ENCODE measurements at regions of chr1 and their contacts with region 1.

Region 1: GRCh38 chr1:12001249-12001917 is 17.9 kb upstream of the MIIP start:
- DNase-seq: peak; percentile 68
- H3K4me3 ChIP-seq: no peak overlapping the region
- H3K27ac ChIP-seq: no peak overlapping the region
- H3K4me1 ChIP-seq: no peaks in the 10 kb centered on the region
- CTCF ChIP-seq: peak; percentile 87

Region 2: GRCh38 chr1:11576109-11576875 is 425.1 kb before region 1 on chr1:
- CTCF ChIA-PET with region 1: no interaction called
- POLR2A ChIA-PET with region 1: no interaction called
- intact Hi-C with region 1: no loop called
- DNase-seq: no peak
- H3K4me3 ChIP-seq: no peak overlapping the region
- H3K27ac ChIP-seq: no peak overlapping the region
- H3K4me1 ChIP-seq: no peaks in the 10 kb centered on the region
- CTCF ChIP-seq: no peak

Region 3: GRCh38 chr1:11907275-11908094 is 93.9 kb before region 1 on chr1:
- CTCF ChIA-PET with region 1: no interaction called
- POLR2A ChIA-PET with region 1: no interaction called
- intact Hi-C with region 1: no loop called
- DNase-seq: peak; percentile 96
- H3K4me3 ChIP-seq: no peak overlapping the region
- H3K27ac ChIP-seq: peak overlapping the region; percentile 98
- H3K4me1 ChIP-seq: peaks cover 10% of the 10 kb centered on the region
- CTCF ChIP-seq: peak; percentile 97

Region 4: DNA sequence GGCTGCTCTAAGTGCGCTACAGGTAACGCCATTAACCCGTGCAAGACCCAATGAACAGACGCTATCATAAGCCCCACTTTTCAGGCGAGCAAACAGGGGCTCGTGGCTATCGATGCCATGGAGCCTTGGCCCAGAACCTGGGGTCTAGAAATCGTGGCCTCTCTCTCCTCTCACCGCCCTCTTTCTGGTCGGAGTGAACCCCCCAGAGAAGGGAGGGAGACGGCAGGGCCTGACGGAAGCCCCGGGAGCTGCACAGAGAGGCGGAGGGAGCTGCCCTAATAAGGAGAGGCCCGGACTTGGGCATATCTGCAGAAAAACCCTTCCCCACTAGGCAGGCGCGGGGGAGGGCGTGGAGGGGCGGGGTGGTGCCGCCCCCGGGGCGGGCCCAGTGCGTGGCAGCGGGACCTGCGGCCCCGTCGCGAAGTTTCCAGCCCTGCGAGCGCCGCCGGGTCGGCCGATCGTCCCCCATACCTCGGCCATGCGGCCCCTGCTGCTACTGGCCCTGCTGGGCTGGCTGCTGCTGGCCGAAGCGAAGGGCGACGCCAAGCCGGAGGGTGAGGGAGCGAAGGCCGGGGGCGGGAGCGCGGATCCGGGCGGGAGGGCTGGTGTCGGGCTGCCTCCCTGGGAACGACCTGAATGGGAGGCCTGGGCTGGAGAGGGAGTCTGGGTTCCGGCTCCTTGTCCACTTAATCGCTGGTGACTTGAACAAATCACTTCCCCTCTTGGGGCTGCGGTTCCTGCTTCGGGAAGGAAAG is 66.9 kb before region 1 on chr1 and contains the start of gene PLOD1:
- CTCF ChIA-PET with region 1: no interaction called
- POLR2A ChIA-PET with region 1: no interaction called
- intact Hi-C with region 1: no loop called
- DNase-seq: peak; percentile 76
- H3K4me3 ChIP-seq: peak within 1 kb of the TSS; percentile 73
- H3K27ac ChIP-seq: no peak within 1 kb of the TSS
- H3K4me1 ChIP-seq: peaks cover 31% of the 10 kb centered on the region
- CTCF ChIP-seq: no peak
- total RNA-seq, gene PLOD1: 9.4 and 11.3 TPM in 2 replicates

Region 5: DNA sequence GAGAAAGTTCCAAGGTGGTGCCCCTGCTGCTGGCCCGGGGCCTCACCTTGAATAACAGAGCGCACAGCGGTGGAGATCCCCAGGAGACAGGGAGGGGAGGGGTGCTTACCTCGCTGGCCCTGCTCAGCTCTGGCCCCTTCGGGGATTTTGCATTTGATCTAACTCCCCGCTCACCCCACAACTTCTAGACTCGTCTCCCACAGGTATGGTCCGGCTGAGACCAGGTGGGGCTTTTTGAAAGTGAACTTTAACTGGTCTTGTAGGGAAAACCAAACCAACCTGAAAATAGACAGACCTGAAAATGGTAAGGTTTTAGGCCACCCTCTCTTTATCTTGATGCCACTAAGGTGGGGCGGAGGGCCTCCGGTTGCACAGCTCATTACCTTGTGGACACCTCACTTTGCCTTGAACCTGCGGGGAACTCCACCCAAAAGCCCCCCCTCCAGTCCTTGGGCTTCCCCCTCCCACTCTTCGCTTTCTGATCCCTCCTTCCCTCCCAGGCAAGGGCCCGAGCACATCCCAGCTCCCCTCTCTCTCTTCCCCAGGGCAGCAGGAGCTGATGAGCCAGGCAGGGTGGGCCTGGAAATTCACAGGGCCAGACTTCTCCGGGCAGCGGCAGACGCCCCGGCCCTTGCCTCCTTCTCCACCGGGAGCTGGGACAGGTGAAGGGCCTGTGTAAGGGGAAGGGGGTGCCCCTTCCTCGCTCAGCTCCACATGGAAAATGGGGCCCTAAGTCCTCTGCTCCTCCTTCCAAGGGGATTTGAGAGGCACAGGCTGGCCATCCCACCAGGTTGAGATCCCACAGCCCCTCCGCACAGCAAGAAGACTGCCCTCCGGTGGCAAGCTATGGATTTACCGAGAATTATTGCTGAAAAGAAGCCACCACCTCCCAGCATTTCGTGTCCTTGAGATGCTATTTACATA is 77.8 kb after region 1 on chr1:
- CTCF ChIA-PET with region 1: no interaction called
- POLR2A ChIA-PET with region 1: no interaction called
- intact Hi-C with region 1: loop called (anchors 1 kb)
- DNase-seq: peak; percentile 70
- H3K4me3 ChIP-seq: no peak overlapping the region
- H3K27ac ChIP-seq: no peak overlapping the region
- H3K4me1 ChIP-seq: peaks cover 20% of the 10 kb centered on the region
- CTCF ChIP-seq: peak; percentile 82